ENCODE measurements at regions of chr3 and their contacts with region 1.

Region 1: DNA sequence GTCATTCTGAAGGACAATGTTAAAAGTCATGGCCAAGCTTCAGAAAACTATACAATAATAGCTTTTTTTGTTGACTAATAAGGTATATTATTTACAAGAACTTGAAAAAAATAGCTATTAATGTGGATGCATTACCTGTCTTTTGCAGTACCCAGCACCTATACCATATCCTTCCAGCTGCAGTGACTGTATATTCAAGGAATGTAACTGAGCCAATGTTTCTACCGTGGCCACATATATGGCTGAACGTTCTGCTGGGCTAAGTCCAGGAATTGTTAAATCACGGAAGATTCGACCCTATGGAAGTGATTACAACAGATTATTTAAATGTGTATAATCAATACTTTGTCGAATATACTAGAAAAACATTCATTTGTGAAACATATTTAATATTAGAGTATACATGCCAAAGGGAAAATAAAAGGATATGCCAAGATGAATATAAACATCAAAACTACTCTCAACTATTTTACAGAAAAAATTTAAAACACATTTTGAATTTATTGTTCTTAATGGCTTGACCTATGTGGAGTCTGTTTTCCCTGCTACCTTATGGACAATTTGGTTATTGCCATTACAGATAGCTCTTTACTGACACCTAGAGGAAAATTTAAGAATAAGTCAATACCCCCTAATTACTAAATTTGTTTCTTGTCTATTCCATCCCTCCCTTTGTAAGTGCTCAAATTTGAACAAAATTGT is 17.6 kb downstream of the ACAD11 start:
- DNase-seq: no peak
- H3K4me3 ChIP-seq: no peak overlapping the region
- H3K27ac ChIP-seq: no peak overlapping the region
- H3K27me3 ChIP-seq: no peaks in the 10 kb centered on the region
- CTCF ChIP-seq: peak; percentile 74

Region 2: GRCh38 chr3:132174500-132174899 is 467.5 kb before region 1 on chr3:
- CTCF ChIA-PET with region 1: no interaction called
- POLR2A ChIA-PET with region 1: no interaction called
- DNase-seq: no peak
- H3K4me3 ChIP-seq: no peak overlapping the region
- H3K27ac ChIP-seq: no peak overlapping the region
- H3K27me3 ChIP-seq: no peaks in the 10 kb centered on the region
- CTCF ChIP-seq: no peak

Region 3: GRCh38 chr3:132352541-132353143 is 289.3 kb before region 1 on chr3:
- CTCF ChIA-PET with region 1: interaction called, 13 read pairs
- POLR2A ChIA-PET with region 1: no interaction called
- DNase-seq: peak; percentile 42
- H3K4me3 ChIP-seq: no peak overlapping the region
- H3K27ac ChIP-seq: no peak overlapping the region
- H3K27me3 ChIP-seq: peaks cover 7% of the 10 kb centered on the region
- CTCF ChIP-seq: peak; percentile 98

Region 4: GRCh38 chr3:132530624-132531023 is 111.4 kb before region 1 on chr3:
- CTCF ChIA-PET with region 1: interaction called, 381 read pairs
- POLR2A ChIA-PET with region 1: interaction called, 5 read pairs
- DNase-seq: no peak
- H3K4me3 ChIP-seq: no peak overlapping the region
- H3K27ac ChIP-seq: no peak overlapping the region
- H3K27me3 ChIP-seq: no peaks in the 10 kb centered on the region
- CTCF ChIP-seq: no peak

Region 5: GRCh38 chr3:132543036-132543739 is 98.8 kb before region 1 on chr3:
- CTCF ChIA-PET with region 1: interaction called, 381 read pairs
- POLR2A ChIA-PET with region 1: interaction called, 5 read pairs
- DNase-seq: peak; percentile 84
- H3K4me3 ChIP-seq: no peak overlapping the region
- H3K27ac ChIP-seq: peak overlapping the region; percentile 95
- H3K27me3 ChIP-seq: no peaks in the 10 kb centered on the region
- CTCF ChIP-seq: no peak

Region 6: GRCh38 chr3:132549890-132550578 is 92.0 kb before region 1 on chr3:
- CTCF ChIA-PET with region 1: interaction called, 13 read pairs
- POLR2A ChIA-PET with region 1: no interaction called
- DNase-seq: no peak
- H3K4me3 ChIP-seq: no peak overlapping the region
- H3K27ac ChIP-seq: no peak overlapping the region
- H3K27me3 ChIP-seq: no peaks in the 10 kb centered on the region
- CTCF ChIP-seq: no peak

Region 7: GRCh38 chr3:132652640-132653270 is 10.8 kb after region 1 on chr3:
- CTCF ChIA-PET with region 1: interaction called, 28 read pairs
- POLR2A ChIA-PET with region 1: no interaction called
- DNase-seq: no peak
- H3K4me3 ChIP-seq: no peak overlapping the region
- H3K27ac ChIP-seq: no peak overlapping the region
- H3K27me3 ChIP-seq: no peaks in the 10 kb centered on the region
- CTCF ChIP-seq: no peak

Region 8: DNA sequence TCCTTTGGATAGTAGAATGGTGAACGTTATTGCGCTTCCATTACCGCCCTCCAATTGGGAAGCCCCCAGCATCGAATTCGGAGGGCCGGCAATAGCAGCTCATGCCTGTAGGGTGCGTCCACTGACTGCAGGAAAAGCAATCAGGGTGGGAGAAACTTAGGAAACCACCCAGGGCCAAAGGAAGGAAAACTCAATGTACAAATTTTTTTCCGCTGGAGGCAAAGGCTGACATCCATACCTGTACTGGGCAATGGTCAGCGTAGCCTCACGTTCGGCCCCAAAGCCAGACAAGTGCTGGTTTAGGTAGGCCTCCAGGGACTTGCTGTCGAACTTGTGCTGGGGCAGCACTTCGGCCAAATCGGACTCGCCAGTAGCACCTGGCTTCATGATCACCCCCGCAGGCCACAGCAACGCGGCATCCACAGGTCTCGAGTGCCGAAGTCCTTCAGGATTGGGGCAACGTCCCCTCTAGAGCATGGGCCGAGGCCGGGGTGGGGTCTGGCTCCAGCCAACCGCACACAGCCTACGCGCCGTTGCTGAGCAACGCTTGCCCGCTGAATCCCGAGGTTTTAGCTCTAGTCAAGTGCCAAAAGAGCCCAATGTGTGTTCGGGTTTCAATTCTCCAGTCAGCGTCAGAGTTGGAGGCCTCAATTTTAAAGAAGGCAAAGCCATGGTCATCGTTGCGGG is 17.5 kb after region 1 on chr3 and contains the start of gene ACAD11:
- CTCF ChIA-PET with region 1: interaction called, 28 read pairs
- POLR2A ChIA-PET with region 1: no interaction called
- DNase-seq: peak; percentile 15
- H3K4me3 ChIP-seq: peak within 1 kb of the TSS; percentile 76
- H3K27ac ChIP-seq: peak within 1 kb of the TSS; percentile 84
- H3K27me3 ChIP-seq: no peaks in the 10 kb centered on the region
- CTCF ChIP-seq: peak; percentile 76
- polyA plus RNA-seq, gene ACAD11: 21.9 and 23.3 TPM in 2 replicates

Measured in AG04450 (cell line).